Mammary epithelial cell (primary cell): ENCODE measurements at regions of chr3 and their contacts with region 1.

Region 1: DNA sequence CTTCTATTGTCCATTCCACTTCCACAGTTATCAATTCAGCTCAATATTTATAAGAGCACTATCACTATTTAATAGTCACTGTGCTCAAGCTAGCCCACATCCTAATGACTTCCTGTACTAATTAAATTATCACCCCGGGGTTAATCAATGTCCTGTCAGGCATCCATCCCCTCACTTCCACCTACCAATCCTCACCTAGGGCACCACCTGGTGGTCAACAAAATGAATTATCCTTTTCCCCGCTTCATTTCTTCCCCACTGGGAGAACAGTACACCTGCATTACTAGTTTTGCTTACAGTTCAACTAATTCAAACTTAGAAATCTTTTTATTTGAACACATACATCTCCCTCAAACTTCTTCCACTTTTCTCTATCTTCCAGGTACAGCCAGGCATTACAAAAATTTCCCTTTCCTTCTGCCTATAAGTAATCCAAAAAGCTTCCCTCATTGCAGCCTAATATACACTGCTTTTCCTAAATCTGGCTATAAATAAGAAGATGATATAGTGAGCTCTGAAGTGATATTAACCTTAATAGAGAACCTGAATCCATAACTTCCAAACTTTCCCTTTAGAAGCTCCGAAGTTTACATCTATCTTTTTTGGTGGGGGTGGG is 68.5 kb downstream of the TMCC1 start:
- DNase-seq: peak; percentile 29
- H3K4me3 ChIP-seq: no peak overlapping the region
- H3K27ac ChIP-seq: no peak overlapping the region
- H3K4me1 ChIP-seq: peaks cover 5% of the 10 kb centered on the region
- H3K27me3 ChIP-seq: no peaks in the 10 kb centered on the region
- CTCF ChIP-seq: peak; percentile 52 to 70

Region 2: DNA sequence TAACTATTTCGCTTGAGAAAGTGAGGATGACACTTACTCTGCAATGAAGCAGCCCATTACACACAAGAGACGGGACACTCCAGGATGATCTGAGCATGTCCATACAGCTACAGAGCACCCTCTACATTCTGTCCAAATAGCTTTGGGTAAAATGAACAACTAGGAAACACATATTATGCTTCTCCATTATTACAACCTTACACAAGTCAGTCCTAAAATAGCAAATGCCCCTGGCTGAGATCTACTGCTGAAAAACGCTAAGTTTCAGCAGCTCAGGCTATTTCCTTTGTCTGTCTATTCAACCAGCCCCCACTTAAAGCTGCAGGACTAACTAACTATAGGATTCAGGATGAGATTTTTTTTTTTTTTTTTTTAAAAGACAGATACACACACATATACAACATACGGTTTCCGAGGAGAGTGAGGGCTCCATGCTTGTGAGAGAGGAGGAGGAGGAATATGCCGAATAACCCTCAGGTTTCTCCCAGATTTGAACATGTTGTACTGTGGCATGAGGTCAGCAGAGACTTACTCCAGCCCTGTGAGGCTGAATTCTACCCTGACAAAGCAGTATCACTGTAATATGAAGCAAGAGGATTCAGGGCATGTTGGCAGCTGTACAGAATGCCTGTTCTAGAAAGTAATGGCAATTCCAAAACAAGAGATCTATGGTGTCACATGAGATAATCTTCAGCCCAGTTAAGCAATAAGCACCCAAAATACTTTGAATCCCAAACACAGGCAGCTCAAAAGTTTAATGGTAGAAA is 101.3 kb before region 1 on chr3:
- CTCF ChIA-PET with region 1: no interaction called
- dilution Hi-C with region 1: no loop called
- in situ Hi-C with region 1: no loop called
- intact Hi-C with region 1: no loop called
- DNase-seq: peak; percentile 89
- H3K4me3 ChIP-seq: peak overlapping the region; percentile 22 to 46 (median 33)
- H3K27ac ChIP-seq: peak overlapping the region; percentile 89
- H3K4me1 ChIP-seq: peaks cover 21% of the 10 kb centered on the region
- H3K27me3 ChIP-seq: no peaks in the 10 kb centered on the region
- CTCF ChIP-seq: no peak

Region 3: GRCh38 chr3:129739613-129740012 is 85.4 kb before region 1 on chr3:
- CTCF ChIA-PET with region 1: no interaction called
- dilution Hi-C with region 1: loop called (anchors 5 kb)
- in situ Hi-C with region 1: no loop called
- intact Hi-C with region 1: no loop called
- DNase-seq: no peak
- H3K4me3 ChIP-seq: no peak overlapping the region
- H3K27ac ChIP-seq: no peak overlapping the region
- H3K4me1 ChIP-seq: no peaks in the 10 kb centered on the region
- H3K27me3 ChIP-seq: no peaks in the 10 kb centered on the region
- CTCF ChIP-seq: no peak